Left ventricle myocardium superior (tissue), 1 donor: ENCODE measurements at regions of chr2 and their contacts with region 1.

Region 1: GRCh38 chr2:102764083-102764482 is 2.3 kb downstream of the TMEM182 start:
- DNase-seq: no peak
- ATAC-seq: no peak

Region 2: DNA sequence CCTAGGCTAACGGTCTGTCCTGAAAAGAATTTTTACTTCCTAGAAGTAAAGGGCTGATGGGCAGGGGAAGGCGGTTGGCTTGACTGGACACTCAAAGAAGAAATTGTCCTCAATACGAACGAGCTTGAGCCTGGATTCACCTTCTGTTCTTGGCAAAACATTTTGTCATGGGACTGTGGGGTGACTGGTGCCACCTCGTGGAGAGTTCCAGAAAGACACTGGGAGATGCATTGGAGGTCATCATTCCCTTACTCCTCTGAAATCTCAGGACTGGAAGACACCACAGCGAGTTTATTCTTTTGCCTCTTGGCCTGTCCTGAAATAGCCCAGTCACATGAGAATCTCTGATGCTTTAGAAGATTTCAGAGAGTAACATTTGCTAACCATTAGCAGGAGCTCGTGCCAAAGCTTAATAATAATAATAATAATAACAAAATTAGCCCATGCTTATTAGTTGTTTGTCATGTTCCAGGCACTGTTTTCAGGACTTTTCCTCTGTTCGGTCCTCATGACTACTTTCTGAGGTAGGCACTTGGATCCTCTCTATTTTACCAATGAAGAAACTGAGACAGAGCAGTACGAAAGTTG is 42.3 kb after region 1 on chr2:
- intact Hi-C with region 1: loop called (anchors 5 kb)
- DNase-seq: peak; percentile 69
- ATAC-seq: peak; percentile 61